IMR-90 (cell line): ENCODE measurements at regions of chr17 and their contacts with region 1.

Region 1: GRCh38 chr17:45040459-45040858 is 11.0 kb downstream of the DCAKD start:
- DNase-seq: no peak
- ATAC-seq: peak; percentile 30; the same call in 1 of the 2 replicates
- H3K4me3 ChIP-seq: no peak overlapping the region
- H3K27ac ChIP-seq: no peak overlapping the region
- H3K4me1 ChIP-seq: peaks cover 18% of the 10 kb centered on the region; the same call in 1 of the 2 replicates
- H3K27me3 ChIP-seq: no peaks in the 10 kb centered on the region
- CTCF ChIP-seq: no peak
- POLR2A ChIP-seq: no peak
- RAD21 ChIP-seq: no peak

Region 2: DNA sequence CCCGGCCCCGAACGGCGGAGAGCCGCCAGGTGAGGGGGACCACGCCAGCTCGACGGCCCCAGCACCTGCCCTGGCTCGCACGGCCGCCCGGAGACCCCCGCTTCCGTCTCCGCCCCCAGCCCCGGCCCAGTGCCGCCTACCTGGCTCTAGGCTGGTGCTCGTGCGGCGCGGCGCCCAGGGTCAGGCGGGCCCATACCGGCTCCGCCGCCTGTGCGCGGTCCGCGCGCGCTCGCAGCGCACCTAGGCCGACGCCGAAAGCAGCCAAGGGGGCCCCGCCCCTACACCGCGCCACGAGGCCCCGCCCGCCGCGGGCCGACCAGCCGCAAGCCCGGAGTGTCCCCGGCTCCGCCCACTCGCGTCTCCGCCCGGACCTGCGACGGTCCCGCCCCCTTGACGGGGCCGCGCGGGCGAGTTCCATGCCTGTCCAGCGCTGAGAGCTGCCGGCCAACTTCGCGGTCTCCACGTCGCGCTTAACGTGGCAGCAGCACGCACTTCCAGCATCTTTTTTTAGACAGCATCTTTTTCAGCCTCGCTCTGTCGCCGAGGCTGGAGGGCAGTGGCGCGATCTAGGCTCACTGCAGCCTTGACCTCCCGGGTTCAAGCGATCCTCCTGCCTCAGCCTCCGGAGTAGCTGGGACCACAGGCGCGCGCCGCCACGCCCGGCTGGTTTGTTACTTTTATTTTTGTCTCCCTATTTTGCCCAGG is 715.7 kb before region 1 on chr17 and contains the start of gene SLC25A39:
- CTCF ChIA-PET with region 1: no interaction called
- POLR2A ChIA-PET with region 1: no interaction called
- dilution Hi-C with region 1: no loop called
- in situ Hi-C with region 1: no loop called
- intact Hi-C with region 1: no loop called
- DNase-seq: peak; percentile 93
- ATAC-seq: peak; percentile 95
- H3K4me3 ChIP-seq: peak within 1 kb of the TSS; percentile 88
- H3K27ac ChIP-seq: peak within 1 kb of the TSS; percentile 49
- H3K4me1 ChIP-seq: peaks cover 9% of the 10 kb centered on the region
- H3K27me3 ChIP-seq: no peaks in the 10 kb centered on the region
- CTCF ChIP-seq: no peak
- POLR2A ChIP-seq: peak; percentile 41; the same call in 1 of the 2 replicates
- RAD21 ChIP-seq: no peak
- total RNA-seq, gene SLC25A39: 49.1 and 49.2 TPM in 2 replicates

Region 3: GRCh38 chr17:44722254-44722653 is 318.2 kb before region 1 on chr17:
- CTCF ChIA-PET with region 1: no interaction called
- POLR2A ChIA-PET with region 1: interaction called, 11 read pairs
- dilution Hi-C with region 1: no loop called
- in situ Hi-C with region 1: no loop called
- intact Hi-C with region 1: no loop called
- DNase-seq: no peak
- ATAC-seq: no peak
- H3K4me3 ChIP-seq: no peak overlapping the region
- H3K27ac ChIP-seq: no peak overlapping the region
- H3K4me1 ChIP-seq: no peaks in the 10 kb centered on the region
- H3K27me3 ChIP-seq: no peaks in the 10 kb centered on the region
- CTCF ChIP-seq: no peak
- POLR2A ChIP-seq: no peak
- RAD21 ChIP-seq: no peak

Region 4: DNA sequence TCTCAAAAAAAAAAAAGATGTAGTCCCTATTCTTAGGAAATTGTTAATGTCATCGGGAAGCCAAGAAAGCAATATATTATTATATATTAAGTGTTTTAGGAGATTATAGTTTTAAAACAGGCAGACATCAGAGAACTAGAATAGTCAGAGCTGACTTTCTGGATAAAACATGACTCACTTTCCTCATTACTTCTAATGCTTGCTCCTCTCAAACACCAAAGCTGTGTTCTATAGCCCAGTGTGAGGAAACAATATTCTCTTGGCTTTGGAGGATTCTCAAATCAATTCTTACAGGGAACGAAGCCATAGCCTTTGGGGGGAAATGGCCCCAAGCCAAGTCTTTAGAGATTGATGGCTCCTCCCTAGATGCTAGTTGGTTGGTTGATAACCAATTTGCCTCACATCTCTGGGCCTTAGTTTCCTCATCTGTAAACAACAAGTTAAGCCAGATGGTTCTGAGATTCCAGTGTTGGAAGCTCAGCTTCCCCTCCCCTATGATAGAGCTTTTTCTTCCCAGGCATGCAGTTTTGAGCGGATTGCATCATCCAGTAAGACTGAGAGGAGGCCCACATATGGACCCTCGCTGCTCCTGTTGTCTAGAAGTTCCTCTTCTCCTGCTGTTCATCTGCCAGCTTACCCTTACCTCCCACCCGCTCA is 33.1 kb after region 1 on chr17:
- CTCF ChIA-PET with region 1: interaction called, 4 read pairs
- POLR2A ChIA-PET with region 1: interaction called, 16 read pairs
- dilution Hi-C with region 1: no loop called
- in situ Hi-C with region 1: no loop called
- intact Hi-C with region 1: no loop called
- DNase-seq: peak; percentile 97
- ATAC-seq: peak; percentile 89
- H3K4me3 ChIP-seq: no peak overlapping the region
- H3K27ac ChIP-seq: peak overlapping the region; percentile 100
- H3K4me1 ChIP-seq: peaks cover 14% of the 10 kb centered on the region
- H3K27me3 ChIP-seq: no peaks in the 10 kb centered on the region
- CTCF ChIP-seq: no peak
- POLR2A ChIP-seq: no peak
- RAD21 ChIP-seq: no peak